Endothelial cell of umbilical vein (primary cell): ENCODE measurements at regions of chr12 and their contacts with region 1.

Region 1: DNA sequence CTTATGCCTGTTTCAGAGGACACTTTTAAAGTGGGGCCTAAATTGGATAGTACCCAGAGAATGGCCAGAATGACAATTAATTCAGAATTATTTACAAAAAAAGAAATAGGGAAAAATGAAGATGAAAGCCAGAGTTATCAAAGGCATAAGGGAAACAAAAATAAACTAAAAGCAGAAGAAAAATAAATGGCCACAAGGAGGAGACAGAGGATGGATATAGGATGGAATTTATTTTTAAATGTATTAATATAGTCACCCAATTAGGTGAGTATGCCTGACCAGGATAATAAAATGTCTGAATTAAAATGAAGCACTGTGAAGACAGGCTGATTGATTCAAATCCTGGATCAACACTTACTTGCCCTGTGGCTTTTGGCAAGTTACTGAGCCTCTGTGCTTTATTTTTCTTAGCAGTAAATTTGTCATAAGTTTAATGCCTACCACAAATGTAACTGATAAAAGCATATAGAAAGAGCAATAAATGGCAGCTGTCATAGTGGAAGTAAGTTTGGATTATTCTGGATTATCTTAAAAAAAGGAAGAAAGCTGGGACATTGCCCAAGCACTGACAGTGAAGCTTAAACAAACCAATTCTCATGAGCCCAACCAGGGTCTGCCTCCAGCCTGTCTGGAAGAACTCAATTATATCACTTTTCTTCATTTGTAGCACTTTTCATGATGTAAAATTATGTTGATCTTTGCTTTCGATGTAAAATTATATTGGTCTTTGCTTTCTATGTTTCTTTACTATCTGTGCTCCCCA is 3.5 kb downstream of the CLEC9A start:
- DNase-seq: peak; percentile 75
- H3K4me3 ChIP-seq: no peak overlapping the region
- H3K27ac ChIP-seq: peak overlapping the region; percentile 99
- H3K4me1 ChIP-seq: peaks cover 31% of the 10 kb centered on the region
- H3K27me3 ChIP-seq: no peaks in the 10 kb centered on the region
- CTCF ChIP-seq: peak; percentile 12 to 17
- POLR2A ChIP-seq: no peak

Region 2: GRCh38 chr12:9813821-9814809 is 219.8 kb before region 1 on chr12:
- CTCF ChIA-PET with region 1: interaction called, 8 read pairs
- POLR2A ChIA-PET with region 1: no interaction called
- dilution Hi-C with region 1: no loop called
- intact Hi-C with region 1: loop called (anchors 1 kb)
- DNase-seq: peak; percentile 74
- H3K4me3 ChIP-seq: peak overlapping the region in 2 of 3 experiments; percentile 3 to 28
- H3K27ac ChIP-seq: no peak overlapping the region
- H3K4me1 ChIP-seq: no peaks in the 10 kb centered on the region
- H3K27me3 ChIP-seq: peaks cover 0 to 7% of the 10 kb centered on the region in 2 experiments
- CTCF ChIP-seq: peak; percentile 93 to 99
- POLR2A ChIP-seq: no peak

Region 3: GRCh38 chr12:9902539-9903228 is 131.3 kb before region 1 on chr12:
- CTCF ChIA-PET with region 1: no interaction called
- POLR2A ChIA-PET with region 1: no interaction called
- dilution Hi-C with region 1: no loop called
- intact Hi-C with region 1: no loop called
- DNase-seq: no peak
- H3K4me3 ChIP-seq: no peak overlapping the region
- H3K27ac ChIP-seq: no peak overlapping the region
- H3K4me1 ChIP-seq: no peaks in the 10 kb centered on the region
- H3K27me3 ChIP-seq: peaks cover 5 to 13% of the 10 kb centered on the region in 2 experiments
- CTCF ChIP-seq: no peak
- POLR2A ChIP-seq: no peak

Region 4: GRCh38 chr12:10001171-10001776 is 32.7 kb before region 1 on chr12:
- CTCF ChIA-PET with region 1: no interaction called
- POLR2A ChIA-PET with region 1: no interaction called
- dilution Hi-C with region 1: no loop called
- intact Hi-C with region 1: no loop called
- DNase-seq: no peak
- H3K4me3 ChIP-seq: no peak overlapping the region
- H3K27ac ChIP-seq: no peak overlapping the region
- H3K4me1 ChIP-seq: no peaks in the 10 kb centered on the region
- H3K27me3 ChIP-seq: no peaks in the 10 kb centered on the region
- CTCF ChIP-seq: no peak
- POLR2A ChIP-seq: no peak

Region 5: DNA sequence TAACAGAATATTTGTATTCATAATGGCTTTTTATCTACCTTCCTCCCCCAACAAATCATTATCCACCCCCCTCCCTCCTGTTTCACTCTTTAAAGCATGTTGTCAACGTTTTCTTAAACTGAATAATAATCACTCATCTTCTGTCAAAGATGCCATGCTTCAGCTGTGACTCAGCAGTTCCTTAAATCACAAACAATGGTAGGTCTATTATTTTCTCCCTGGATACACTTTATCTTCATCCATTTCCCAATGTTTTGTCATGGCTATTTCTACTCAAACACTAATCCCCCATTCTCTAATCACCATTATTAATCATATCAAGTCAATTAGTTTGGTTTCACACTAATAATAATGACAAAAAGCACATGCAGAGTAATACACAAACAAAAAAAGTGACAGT is 17.1 kb before region 1 on chr12:
- CTCF ChIA-PET with region 1: interaction called, 5 read pairs
- POLR2A ChIA-PET with region 1: no interaction called
- dilution Hi-C with region 1: no loop called
- intact Hi-C with region 1: loop called (anchors 1 kb)
- DNase-seq: peak; percentile 86
- H3K4me3 ChIP-seq: no peak overlapping the region
- H3K27ac ChIP-seq: peak overlapping the region; percentile 99
- H3K4me1 ChIP-seq: peaks cover 27% of the 10 kb centered on the region
- H3K27me3 ChIP-seq: no peaks in the 10 kb centered on the region
- CTCF ChIP-seq: no peak
- POLR2A ChIP-seq: no peak

Region 6: GRCh38 chr12:10098791-10099190 is 64.8 kb after region 1 on chr12 and contains the start of gene CLEC1A:
- CTCF ChIA-PET with region 1: interaction called, 4 read pairs
- POLR2A ChIA-PET with region 1: interaction called, 3 read pairs
- dilution Hi-C with region 1: no loop called
- intact Hi-C with region 1: loop called (anchors 2 kb)
- DNase-seq: peak; percentile 82
- H3K4me3 ChIP-seq: peak within 1 kb of the TSS; percentile 38 to 63 (median 43)
- H3K27ac ChIP-seq: peak within 1 kb of the TSS; percentile 75
- H3K4me1 ChIP-seq: peaks cover 7% of the 10 kb centered on the region
- H3K27me3 ChIP-seq: no peaks in the 10 kb centered on the region
- CTCF ChIP-seq: no peak
- POLR2A ChIP-seq: peak; percentile 50
- total RNA-seq, gene CLEC1A: 22.5 and 24.2 TPM in 2 replicates

Region 7: DNA sequence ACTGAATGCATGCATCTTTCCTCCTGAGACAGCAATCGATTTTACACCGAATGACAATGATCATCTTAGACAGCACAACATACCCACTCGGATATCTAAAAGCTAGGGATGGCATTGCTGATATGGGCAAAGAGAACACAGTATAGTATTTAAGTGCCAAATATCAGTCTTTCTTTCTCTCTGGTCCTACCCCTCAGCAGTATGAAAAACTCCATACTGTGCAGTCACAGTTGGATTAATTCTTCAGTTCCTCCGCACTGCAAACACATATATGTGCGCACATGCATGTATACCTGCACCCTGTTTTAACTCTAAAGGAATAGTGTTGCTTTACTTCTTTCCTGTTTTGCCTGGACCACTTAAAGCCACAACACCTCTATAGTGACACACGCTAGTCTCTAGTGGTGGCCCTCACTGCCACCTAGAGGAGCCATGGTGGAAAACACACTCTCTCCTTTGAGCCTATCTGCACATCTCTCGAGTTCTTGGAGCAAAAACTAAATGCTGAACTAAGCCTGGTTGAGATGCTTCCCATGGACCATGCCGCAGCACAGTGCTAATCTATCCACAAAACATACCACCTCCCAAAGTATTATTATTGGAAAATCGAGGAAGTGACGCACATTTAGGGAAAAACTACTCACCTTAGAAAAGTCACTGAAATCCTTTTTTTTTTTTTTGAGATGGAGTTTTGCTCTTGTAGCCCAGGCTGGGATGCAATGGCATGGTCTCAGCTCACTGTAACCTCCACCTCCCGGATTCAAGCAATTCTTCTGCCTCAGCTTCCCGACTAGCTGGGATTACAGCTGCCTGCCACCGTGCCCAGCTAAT is 156.8 kb after region 1 on chr12:
- CTCF ChIA-PET with region 1: interaction called, 3 read pairs
- POLR2A ChIA-PET with region 1: no interaction called
- dilution Hi-C with region 1: no loop called
- intact Hi-C with region 1: loop called (anchors 2 kb)
- DNase-seq: peak; percentile 74
- H3K4me3 ChIP-seq: no peak overlapping the region
- H3K27ac ChIP-seq: no peak overlapping the region
- H3K4me1 ChIP-seq: no peaks in the 10 kb centered on the region
- H3K27me3 ChIP-seq: peaks cover 3% of the 10 kb centered on the region in 2 experiments
- CTCF ChIP-seq: peak; percentile 68 to 77
- POLR2A ChIP-seq: no peak

Region 8: DNA sequence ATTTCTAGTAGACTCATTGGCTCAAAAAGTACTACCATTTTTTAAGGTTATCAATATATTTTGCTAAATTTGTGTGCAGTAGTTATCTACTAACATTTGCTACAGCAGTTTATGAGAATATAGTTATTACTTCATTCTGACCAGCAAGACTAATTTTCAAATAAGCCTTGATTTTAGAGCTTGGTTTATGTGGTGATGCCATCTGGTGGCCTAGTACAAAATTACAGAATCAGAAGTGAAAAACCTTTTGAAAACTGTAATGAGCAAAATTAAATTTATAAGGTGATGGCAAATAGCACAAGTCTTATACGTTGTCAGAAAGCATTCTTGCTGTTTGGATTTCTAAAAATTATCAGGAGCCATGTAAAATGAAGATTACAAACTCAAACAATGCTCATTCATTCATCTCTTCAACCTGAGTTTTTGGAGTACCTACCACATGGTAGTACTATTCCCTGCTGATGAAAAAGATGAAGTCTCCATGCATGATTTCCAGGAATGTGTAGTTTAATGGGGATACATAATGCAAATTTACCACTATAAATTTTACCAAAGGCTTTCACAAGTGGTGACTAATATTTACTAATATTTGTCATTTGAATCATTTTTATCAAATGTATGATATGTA is 528.5 kb after region 1 on chr12:
- CTCF ChIA-PET with region 1: no interaction called
- POLR2A ChIA-PET with region 1: no interaction called
- dilution Hi-C with region 1: no loop called
- intact Hi-C with region 1: loop called (anchors 10 kb)
- DNase-seq: peak; percentile 72
- H3K4me3 ChIP-seq: no peak overlapping the region
- H3K27ac ChIP-seq: no peak overlapping the region
- H3K4me1 ChIP-seq: no peaks in the 10 kb centered on the region
- H3K27me3 ChIP-seq: no peaks in the 10 kb centered on the region
- CTCF ChIP-seq: peak; percentile 34 to 41
- POLR2A ChIP-seq: no peak

Region 9: DNA sequence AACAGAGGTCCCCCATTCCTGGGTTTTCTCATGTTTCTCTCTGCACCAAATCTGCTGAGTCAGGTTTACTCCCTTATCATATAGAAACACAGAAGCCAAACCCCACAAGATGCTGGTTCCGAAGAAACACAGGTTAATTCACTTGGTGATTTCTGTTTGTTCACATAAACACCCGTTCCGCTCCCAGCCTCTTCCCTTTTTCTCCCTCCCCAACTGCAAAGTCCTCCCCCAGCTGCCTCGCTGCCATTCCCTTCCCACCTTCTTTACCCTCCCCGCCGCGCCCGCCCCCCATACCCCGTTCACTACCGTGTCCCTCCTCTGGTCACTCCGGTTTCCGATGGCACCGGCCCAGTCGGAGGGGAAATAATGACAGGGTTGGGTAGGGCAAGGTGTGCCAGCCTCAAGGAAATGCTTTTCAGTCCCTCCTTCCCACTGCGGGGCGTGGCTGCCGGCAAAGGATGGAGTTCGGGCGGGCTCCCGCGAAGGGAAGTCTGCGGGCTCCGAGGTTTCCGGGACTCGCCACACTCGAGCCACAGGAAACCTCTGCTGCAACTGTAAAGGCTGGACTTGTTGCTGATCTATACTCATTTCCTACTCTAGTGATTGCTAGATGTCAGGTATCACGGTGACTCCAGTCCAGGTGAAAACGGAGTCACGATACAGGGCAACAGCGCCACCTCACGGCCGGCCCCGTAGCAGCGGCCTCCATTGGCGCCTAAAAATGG is 639.9 kb after region 1 on chr12 and contains the start of gene STYK1:
- CTCF ChIA-PET with region 1: no interaction called
- POLR2A ChIA-PET with region 1: no interaction called
- dilution Hi-C with region 1: no loop called
- intact Hi-C with region 1: loop called (anchors 5 kb)
- DNase-seq: peak; percentile 75
- H3K4me3 ChIP-seq: peak within 1 kb of the TSS; percentile 49 to 82 (median 69)
- H3K27ac ChIP-seq: peak within 1 kb of the TSS; percentile 49
- H3K4me1 ChIP-seq: peaks cover 22% of the 10 kb centered on the region
- H3K27me3 ChIP-seq: no peaks in the 10 kb centered on the region
- CTCF ChIP-seq: peak; percentile 92 to 95
- POLR2A ChIP-seq: no peak
- total RNA-seq, gene STYK1: 14.6 and 15.2 TPM in 2 replicates